Gastrocnemius medialis (tissue), 4 donors: ENCODE measurements at regions of chr10 and their contacts with region 1.

Region 1: GRCh38 chr10:45420453-45421192 is 46.6 kb downstream of the ALOX5 start:
- DNase-seq: peak; percentile 82 to 90
- ATAC-seq: peak; percentile 92 to 93
- H3K4me3 ChIP-seq: peak overlapping the region in 2 of 4 donors; percentile 15 to 76
- H3K27ac ChIP-seq: peak overlapping the region; percentile 39 to 81 (median 75)
- H3K4me1 ChIP-seq: peaks cover 21 to 27% of the 10 kb centered on the region in 2 donors
- H3K27me3 ChIP-seq: peaks cover 0 to 3% (median 0%) of the 10 kb centered on the region in 3 donors
- CTCF ChIP-seq: no peak
- POLR2A ChIP-seq: no peak

Region 2: GRCh38 chr10:44990302-44990655 is 430.3 kb before region 1 on chr10:
- in situ Hi-C with region 1: no loop called
- intact Hi-C with region 1: loop called (anchors 10 kb)
- DNase-seq: no peak
- ATAC-seq: no peak
- H3K4me3 ChIP-seq: no peak overlapping the region
- H3K27ac ChIP-seq: peak overlapping the region in 3 of 4 donors; percentile 22 to 72 (median 43)
- H3K4me1 ChIP-seq: peaks cover 37 to 47% of the 10 kb centered on the region in 2 donors
- H3K27me3 ChIP-seq: no peaks in the 10 kb centered on the region
- CTCF ChIP-seq: peak in 1 of 5 experiments; percentile 32
- POLR2A ChIP-seq: no peak

Region 3: GRCh38 chr10:45383682-45384330 is 36.8 kb before region 1 on chr10:
- in situ Hi-C with region 1: no loop called
- intact Hi-C with region 1: no loop called
- DNase-seq: no peak
- ATAC-seq: no peak
- H3K4me3 ChIP-seq: no peak overlapping the region
- H3K27ac ChIP-seq: no peak overlapping the region
- H3K4me1 ChIP-seq: no peaks in the 10 kb centered on the region
- H3K27me3 ChIP-seq: no peaks in the 10 kb centered on the region
- CTCF ChIP-seq: no peak
- POLR2A ChIP-seq: no peak

Region 4: GRCh38 chr10:45445327-45445898 is 24.8 kb after region 1 on chr10:
- in situ Hi-C with region 1: no loop called
- intact Hi-C with region 1: loop called (anchors 2 kb)
- DNase-seq: peak; percentile 78 to 80
- ATAC-seq: peak; percentile 99
- H3K4me3 ChIP-seq: no peak overlapping the region
- H3K27ac ChIP-seq: peak overlapping the region; percentile 66 to 85 (median 68)
- H3K4me1 ChIP-seq: peaks cover 13 to 16% of the 10 kb centered on the region in 2 donors
- H3K27me3 ChIP-seq: no peaks in the 10 kb centered on the region
- CTCF ChIP-seq: no peak
- POLR2A ChIP-seq: no peak